AG04450 (cell line): ENCODE measurements at regions of chr22 and their contacts with region 1.

Region 1: GRCh38 chr22:36010882-36011281 is 17.7 kb downstream of the RBFOX2 start:
- DNase-seq: peak; percentile 55
- H3K4me3 ChIP-seq: no peak overlapping the region
- H3K27ac ChIP-seq: peak overlapping the region; percentile 49
- H3K27me3 ChIP-seq: no peaks in the 10 kb centered on the region
- CTCF ChIP-seq: no peak

Region 2: GRCh38 chr22:35971456-35972119 is 39.3 kb before region 1 on chr22:
- CTCF ChIA-PET with region 1: interaction called, 4 read pairs
- POLR2A ChIA-PET with region 1: interaction called, 13 read pairs
- DNase-seq: peak; percentile 80
- H3K4me3 ChIP-seq: peak overlapping the region; percentile 7; the same call in 1 of the 2 replicates
- H3K27ac ChIP-seq: peak overlapping the region; percentile 80
- H3K27me3 ChIP-seq: no peaks in the 10 kb centered on the region
- CTCF ChIP-seq: no peak

Region 3: DNA sequence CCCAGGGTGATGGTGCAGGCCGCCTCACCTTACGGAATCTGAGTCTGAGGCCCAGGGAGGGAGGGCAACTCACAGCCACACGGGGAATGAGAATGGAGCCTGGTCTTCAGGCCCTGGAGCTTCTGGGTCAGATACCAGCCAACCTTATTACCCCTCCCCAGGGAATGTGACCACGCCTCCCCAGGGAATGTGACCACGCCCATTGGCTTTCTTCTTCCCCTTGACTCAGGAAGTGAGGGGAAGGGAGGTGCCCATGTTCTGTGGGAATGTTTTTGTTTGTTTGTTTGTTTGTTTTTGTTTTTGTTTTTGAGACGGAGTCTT is 75.2 kb after region 1 on chr22:
- CTCF ChIA-PET with region 1: no interaction called
- POLR2A ChIA-PET with region 1: no interaction called
- DNase-seq: no peak
- H3K4me3 ChIP-seq: no peak overlapping the region
- H3K27ac ChIP-seq: no peak overlapping the region
- H3K27me3 ChIP-seq: no peaks in the 10 kb centered on the region
- CTCF ChIP-seq: no peak